Ovary (tissue), 10 donors: ENCODE measurements at regions of chr16 and their contacts with region 1.

Region 1: GRCh38 chr16:89708441-89708931 is 7.0 kb upstream of the SPATA2L start:
- DNase-seq: peak in 2 of 5 donors; percentile 7 to 21
- H3K4me3 ChIP-seq: no peak overlapping the region
- H3K27ac ChIP-seq: no peak overlapping the region
- H3K4me1 ChIP-seq: peaks cover 3% of the 10 kb centered on the region
- H3K27me3 ChIP-seq: no peaks in the 10 kb centered on the region
- CTCF ChIP-seq: no peak
- EP300 ChIP-seq: no peak
- POLR2A ChIP-seq: no peak

Region 2: GRCh38 chr16:89860747-89861304 is 152.3 kb after region 1 on chr16:
- intact Hi-C with region 1: loop called in 3 of 4 experiments (anchors 5 to 10 kb)
- DNase-seq: peak; percentile 32 to 81 (median 67)
- H3K4me3 ChIP-seq: no peak overlapping the region
- H3K27ac ChIP-seq: no peak overlapping the region
- H3K4me1 ChIP-seq: no peaks in the 10 kb centered on the region
- H3K27me3 ChIP-seq: no peaks in the 10 kb centered on the region
- CTCF ChIP-seq: peak; percentile 63 to 94 (median 76)
- EP300 ChIP-seq: no peak
- POLR2A ChIP-seq: no peak